ENCODE measurements at regions of chr9 and their contacts with region 1.

Region 1: GRCh38 chr9:114653556-114654159 is 3.9 kb downstream of the TEX53 start:
- DNase-seq: peak; percentile 88
- H3K4me3 ChIP-seq: no peak overlapping the region
- H3K27ac ChIP-seq: peak overlapping the region in 1 of 2 donors; percentile 9
- H3K4me1 ChIP-seq: peaks cover 4% of the 10 kb centered on the region
- H3K27me3 ChIP-seq: no peaks in the 10 kb centered on the region
- CTCF ChIP-seq: peak; percentile 79 to 93 (median 93)
- POLR2A ChIP-seq: no peak

Region 2: GRCh38 chr9:114413861-114414301 is 239.8 kb before region 1 on chr9:
- intact Hi-C with region 1: loop called (anchors 10 kb)
- DNase-seq: no peak
- H3K4me3 ChIP-seq: no peak overlapping the region
- H3K27ac ChIP-seq: no peak overlapping the region
- H3K4me1 ChIP-seq: peaks cover 29% of the 10 kb centered on the region
- H3K27me3 ChIP-seq: no peaks in the 10 kb centered on the region
- CTCF ChIP-seq: no peak
- POLR2A ChIP-seq: no peak